Naive thymus-derived CD4-positive, alpha-beta T cell (primary cell): ENCODE measurements at regions of chr6 and their contacts with region 1.

Region 1: DNA sequence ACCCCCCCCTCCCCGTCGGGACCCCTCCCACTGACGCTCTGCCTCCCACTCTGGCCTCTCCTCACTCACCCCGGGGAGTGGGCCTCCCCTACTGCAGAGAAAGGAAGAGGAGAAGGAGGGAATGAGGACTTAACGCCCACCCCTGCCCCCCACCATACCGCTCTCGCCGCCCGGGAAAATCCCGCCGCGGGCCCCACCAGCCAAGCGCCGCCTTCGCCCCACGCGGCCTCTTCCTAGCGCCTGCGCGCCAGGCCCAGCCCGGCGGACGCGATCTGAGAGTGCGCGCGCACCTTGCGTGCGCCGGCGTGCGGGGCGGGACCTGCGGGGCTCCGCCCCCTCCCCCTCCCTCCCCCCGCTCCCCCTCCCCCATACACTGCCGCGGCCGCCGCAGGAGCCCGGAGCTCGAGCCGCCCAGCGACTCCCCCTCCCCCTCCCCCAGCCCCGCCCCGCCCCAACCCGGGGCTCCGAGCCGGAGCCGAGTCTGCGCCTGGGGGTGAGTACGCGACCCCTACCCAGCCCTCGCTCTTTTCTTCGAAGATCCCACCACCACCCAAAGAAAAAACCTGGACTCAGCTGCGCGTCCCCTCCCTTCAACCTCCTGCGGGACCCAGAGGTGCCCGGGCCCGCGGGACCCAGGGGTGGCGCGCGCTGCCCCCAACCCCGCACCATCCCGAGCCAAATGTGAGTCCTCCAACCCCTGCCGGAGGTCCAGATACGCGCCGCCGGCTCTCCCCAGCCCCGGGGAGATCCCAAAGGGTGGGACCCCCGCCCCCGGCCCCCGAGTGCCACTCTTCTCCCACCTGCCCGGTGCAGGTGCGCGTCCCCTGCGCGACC is at the starts of genes MRPL14 and TMEM63B:
- DNase-seq: peak; percentile 82 to 97 (median 90)
- ATAC-seq: peak; percentile 91
- H3K4me3 ChIP-seq: peak within 1 kb of the TSS; percentile 71
- H3K4me3 Mint-ChIP-seq: peak within 1 kb of the TSS; percentile 91 to 99 (median 96)
- H3K27ac ChIP-seq: peak within 1 kb of the TSS; percentile 97
- H3K27ac Mint-ChIP-seq: peak within 1 kb of the TSS; percentile 87 to 99 (median 96)
- H3K4me1 ChIP-seq: peaks cover 36 to 41% of the 10 kb centered on the region in 2 donors
- H3K4me1 Mint-ChIP-seq: peaks cover 46 to 75% (median 57%) of the 10 kb centered on the region in 7 donors
- H3K27me3 ChIP-seq: no peaks in the 10 kb centered on the region
- H3K27me3 Mint-ChIP-seq: no peaks in the 10 kb centered on the region
- total RNA-seq, gene MRPL14: 12.6 to 58.3 (median 15.8) TPM
- total RNA-seq, gene TMEM63B: 16.2 to 21.4 (median 18.1) TPM

Region 2: DNA sequence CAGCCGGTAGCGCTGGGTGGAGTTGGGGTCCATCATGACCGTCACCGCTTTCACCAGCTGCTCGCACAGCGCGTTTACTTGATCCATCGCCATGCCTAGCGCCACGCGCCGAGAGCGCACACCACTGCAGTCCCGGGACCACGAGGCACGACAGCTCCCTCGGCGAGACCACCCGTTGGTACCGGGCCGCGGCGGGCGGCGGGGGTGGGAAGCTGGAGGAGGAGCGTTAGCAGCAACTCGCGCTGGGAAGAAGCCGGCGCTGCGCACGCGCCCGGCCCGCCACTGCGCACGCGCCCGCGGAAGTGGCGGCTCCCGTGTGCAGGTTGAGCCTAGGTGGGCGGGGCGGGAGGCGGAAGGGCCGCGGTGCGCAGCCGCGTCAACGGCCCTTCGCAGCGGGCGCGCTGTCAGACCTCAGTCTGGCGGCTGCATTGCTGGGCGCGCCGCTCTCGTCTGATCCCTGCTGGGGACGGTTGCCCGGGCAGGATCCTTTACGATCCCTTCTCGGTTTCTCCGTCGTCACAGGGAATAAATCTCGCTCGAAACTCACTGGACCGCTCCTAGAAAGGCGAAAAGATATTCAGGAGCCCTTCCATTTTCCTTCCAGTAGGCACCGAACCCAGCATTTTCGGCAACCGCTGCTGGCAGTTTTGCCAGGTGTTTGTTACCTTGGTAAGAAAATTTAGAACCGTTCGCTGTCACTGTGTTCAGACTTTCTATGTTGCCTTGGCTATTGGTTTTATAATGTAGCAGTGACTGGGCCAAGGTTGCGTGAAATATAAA is 551.4 kb before region 1 on chr6 and contains the starts of genes POLH and XPO5:
- CTCF ChIA-PET with region 1: no interaction called
- POLR2A ChIA-PET with region 1: no interaction called
- intact Hi-C with region 1: loop called (anchors 1 to 2 kb)
- DNase-seq: peak; percentile 83 to 94 (median 88)
- ATAC-seq: peak; percentile 99
- H3K4me3 ChIP-seq: peak within 1 kb of the TSS; percentile 77
- H3K4me3 Mint-ChIP-seq: peak within 1 kb of the TSS; percentile 90 to 100 (median 98)
- H3K27ac ChIP-seq: peak within 1 kb of the TSS; percentile 89
- H3K27ac Mint-ChIP-seq: peak within 1 kb of the TSS; percentile 78 to 94 (median 92)
- H3K4me1 ChIP-seq: peaks cover 20 to 21% of the 10 kb centered on the region in 2 donors
- H3K4me1 Mint-ChIP-seq: peaks cover 21 to 61% (median 40%) of the 10 kb centered on the region in 7 donors
- H3K27me3 ChIP-seq: no peaks in the 10 kb centered on the region
- H3K27me3 Mint-ChIP-seq: no peaks in the 10 kb centered on the region
- total RNA-seq, gene POLH: 9.1 to 65.6 (median 19.3) TPM
- total RNA-seq, gene XPO5: 35.0 to 107 (median 41.9) TPM

Region 3: DNA sequence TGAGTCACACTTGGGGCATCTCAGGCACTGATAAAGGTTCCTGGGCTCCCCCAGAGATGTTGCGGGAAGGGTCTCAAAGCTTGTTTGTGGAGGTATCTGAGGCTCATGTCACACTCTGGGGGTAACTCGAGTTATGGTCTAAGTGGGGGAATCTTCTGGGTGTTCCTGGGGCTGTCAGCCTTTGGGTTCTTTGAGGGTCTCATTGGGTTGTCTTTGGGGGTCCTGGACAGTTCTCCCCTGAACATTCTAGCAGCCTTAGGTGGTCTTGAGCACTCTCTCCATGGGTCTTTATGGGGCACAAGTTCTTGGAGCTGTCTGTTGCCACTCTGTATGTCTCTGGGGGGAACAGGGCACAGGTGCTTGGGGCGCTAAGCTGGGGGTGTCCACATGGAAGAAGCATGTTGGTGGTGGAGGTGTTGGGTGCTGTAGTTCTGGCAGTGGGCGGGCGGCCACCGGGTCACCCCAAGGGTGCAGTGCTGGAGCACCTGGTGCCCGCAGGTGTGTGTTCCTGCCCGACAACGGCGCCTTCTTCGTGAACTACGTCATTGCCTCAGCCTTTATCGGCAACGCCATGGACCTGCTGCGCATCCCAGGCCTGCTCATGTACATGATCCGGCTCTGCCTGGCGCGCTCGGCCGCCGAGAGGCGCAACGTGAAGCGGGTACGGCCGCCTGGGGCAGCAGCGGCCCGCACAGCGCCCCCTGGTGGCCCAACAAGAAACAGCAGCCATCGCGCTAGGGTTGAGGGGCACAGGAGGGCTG is 24.1 kb after region 1 on chr6:
- CTCF ChIA-PET with region 1: no interaction called
- POLR2A ChIA-PET with region 1: interaction called, 3 read pairs
- intact Hi-C with region 1: loop called in 1 of 2 experiments (anchors 1 kb)
- DNase-seq: peak; percentile 63 to 88 (median 73)
- ATAC-seq: peak; percentile 94
- H3K4me3 ChIP-seq: no peak overlapping the region
- H3K4me3 Mint-ChIP-seq: peak overlapping the region in 3 of 10 donors; percentile 30 to 42 (median 34)
- H3K27ac ChIP-seq: no peak overlapping the region
- H3K27ac Mint-ChIP-seq: peak overlapping the region in 3 of 9 donors; percentile 5 to 43 (median 34)
- H3K4me1 ChIP-seq: peaks cover 3 to 8% of the 10 kb centered on the region in 2 donors
- H3K4me1 Mint-ChIP-seq: peaks cover 0 to 7% (median 4%) of the 10 kb centered on the region in 7 donors
- H3K27me3 ChIP-seq: no peaks in the 10 kb centered on the region
- H3K27me3 Mint-ChIP-seq: no peaks in the 10 kb centered on the region

Region 4: GRCh38 chr6:44246663-44247337 is 119.4 kb after region 1 on chr6 and contains the start of gene HSP90AB1:
- CTCF ChIA-PET with region 1: no interaction called
- POLR2A ChIA-PET with region 1: interaction called, 3 read pairs
- intact Hi-C with region 1: loop called (anchors 1 to 2 kb)
- DNase-seq: peak; percentile 78 to 98 (median 97)
- ATAC-seq: peak; percentile 90
- H3K4me3 ChIP-seq: peak within 1 kb of the TSS; percentile 99
- H3K4me3 Mint-ChIP-seq: peak within 1 kb of the TSS; percentile 94 to 99 (median 98)
- H3K27ac ChIP-seq: peak within 1 kb of the TSS; percentile 93
- H3K27ac Mint-ChIP-seq: peak within 1 kb of the TSS; percentile 96 to 100 (median 98)
- H3K4me1 ChIP-seq: peaks cover 15 to 19% of the 10 kb centered on the region in 2 donors
- H3K4me1 Mint-ChIP-seq: peaks cover 29 to 53% (median 44%) of the 10 kb centered on the region in 7 donors
- H3K27me3 ChIP-seq: no peaks in the 10 kb centered on the region
- H3K27me3 Mint-ChIP-seq: peaks cover 0 to 12% (median 0%) of the 10 kb centered on the region in 5 donors
- total RNA-seq, gene HSP90AB1: 345 to 750 (median 366) TPM

Region 5: GRCh38 chr6:44387346-44388133 is 260.1 kb after region 1 on chr6 and contains the start of gene CDC5L:
- CTCF ChIA-PET with region 1: no interaction called
- POLR2A ChIA-PET with region 1: no interaction called
- intact Hi-C with region 1: loop called in 1 of 2 experiments (anchors 1 kb)
- DNase-seq: peak; percentile 80 to 96 (median 93)
- ATAC-seq: peak; percentile 88
- H3K4me3 ChIP-seq: peak within 1 kb of the TSS; percentile 71
- H3K4me3 Mint-ChIP-seq: peak within 1 kb of the TSS; percentile 91 to 100 (median 96)
- H3K27ac ChIP-seq: peak within 1 kb of the TSS; percentile 85
- H3K27ac Mint-ChIP-seq: peak within 1 kb of the TSS; percentile 91 to 99 (median 96)
- H3K4me1 ChIP-seq: peaks cover 17 to 29% of the 10 kb centered on the region in 2 donors
- H3K4me1 Mint-ChIP-seq: peaks cover 24 to 49% (median 46%) of the 10 kb centered on the region in 7 donors
- H3K27me3 ChIP-seq: no peaks in the 10 kb centered on the region
- H3K27me3 Mint-ChIP-seq: peaks cover 0 to 28% (median 0%) of the 10 kb centered on the region in 5 donors
- total RNA-seq, gene CDC5L: 17.4 to 25.4 (median 22.4) TPM